ENCODE measurements at regions of chr17 and their contacts with region 1.

Region 1: DNA sequence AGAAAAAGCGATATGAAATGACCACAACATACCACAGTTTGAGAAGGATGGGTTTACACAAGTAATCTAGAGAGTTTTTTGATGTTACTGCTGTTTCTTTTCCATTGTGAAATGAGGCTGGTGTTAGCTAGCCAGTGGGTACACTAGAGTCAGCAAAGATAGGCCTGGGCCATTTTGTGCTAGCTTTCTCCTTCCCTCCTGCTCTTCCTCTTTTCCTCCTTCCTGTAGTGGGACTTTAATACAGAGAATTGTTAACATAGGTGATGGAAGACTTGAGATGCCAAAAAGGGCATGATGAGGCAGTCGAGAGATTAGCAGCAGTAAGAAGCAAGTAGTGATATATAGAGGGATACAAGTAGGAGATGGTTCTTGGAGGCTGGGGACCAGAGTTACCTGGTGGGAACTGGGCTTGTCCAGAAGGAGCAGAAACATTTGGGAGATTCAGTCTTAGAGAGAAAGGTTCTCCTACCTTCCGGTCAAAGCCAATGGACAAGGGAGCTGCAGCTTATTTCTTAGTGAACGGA is 7.7 kb downstream of the NSRP1 start:
- DNase-seq: no peak
- ATAC-seq: no peak

Region 2: GRCh38 chr17:30278032-30278431 is 153.7 kb after region 1 on chr17:
- intact Hi-C with region 1: loop called (anchors 10 kb)
- DNase-seq: no peak
- ATAC-seq: peak; percentile 64